ENCODE measurements at regions of chr5 and their contacts with region 1.

Region 1: DNA sequence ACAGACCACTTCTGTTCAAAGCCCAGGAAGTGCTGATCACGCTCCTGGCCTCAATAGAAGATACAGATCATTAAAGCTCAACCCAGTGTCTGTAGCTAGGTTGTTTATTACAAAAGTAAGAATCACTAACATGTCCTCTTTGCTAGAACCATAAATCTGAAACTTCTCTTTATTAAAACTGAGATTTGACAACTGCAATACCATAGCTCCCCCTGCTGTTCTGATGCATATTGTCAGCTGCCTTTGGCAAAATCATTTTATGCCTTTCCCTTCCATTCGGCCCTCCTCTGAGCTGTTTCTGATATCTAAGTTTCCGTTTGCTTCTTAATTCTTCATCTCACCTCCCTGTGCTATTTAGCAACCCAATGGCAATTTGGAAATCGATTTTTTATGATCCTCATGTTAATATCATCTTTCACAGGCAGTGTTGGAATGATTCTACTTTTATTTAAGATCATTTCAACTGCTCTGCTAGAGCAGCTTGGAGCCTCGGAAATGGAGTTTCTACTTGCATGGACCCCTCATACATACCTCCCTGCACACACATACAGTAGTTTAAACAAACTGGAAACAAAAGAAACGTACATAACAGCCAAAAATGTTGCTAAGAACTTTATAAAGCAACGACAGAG is 998.8 kb downstream of the MAT2B start:
- DNase-seq: peak; percentile 15 to 67 (median 26)
- ATAC-seq: peak; percentile 78
- H3K4me3 ChIP-seq: no peak overlapping the region
- H3K27ac ChIP-seq: no peak overlapping the region
- H3K4me1 ChIP-seq: no peaks in the 10 kb centered on the region
- H3K27me3 ChIP-seq: no peaks in the 10 kb centered on the region
- CTCF ChIP-seq: peak; percentile 61 to 88 (median 75)
- EP300 ChIP-seq: no peak
- POLR2A ChIP-seq: no peak
- RAD21 ChIP-seq: peak; percentile 95 to 96

Region 2: GRCh38 chr5:163695830-163696578 is 808.3 kb before region 1 on chr5:
- CTCF ChIA-PET with region 1: no interaction called
- POLR2A ChIA-PET with region 1: no interaction called
- in situ Hi-C with region 1: no loop called
- intact Hi-C with region 1: loop called (anchors 10 kb)
- DNase-seq: peak in 2 of 4 experiments; percentile 5 to 8
- ATAC-seq: peak; percentile 62; the same call in 2 of the 3 replicates
- H3K4me3 ChIP-seq: no peak overlapping the region
- H3K27ac ChIP-seq: no peak overlapping the region
- H3K4me1 ChIP-seq: no peaks in the 10 kb centered on the region
- H3K27me3 ChIP-seq: no peaks in the 10 kb centered on the region
- CTCF ChIP-seq: peak in 2 of 3 experiments; percentile 35 to 39; a peak in 1 of 6 replicates
- EP300 ChIP-seq: no peak
- POLR2A ChIP-seq: no peak
- RAD21 ChIP-seq: peak; percentile 37 to 66; a peak in 3 of 4 replicates

Region 3: GRCh38 chr5:164013077-164013670 is 491.1 kb before region 1 on chr5:
- CTCF ChIA-PET with region 1: interaction called, 11 read pairs
- POLR2A ChIA-PET with region 1: no interaction called
- in situ Hi-C with region 1: no loop called
- intact Hi-C with region 1: loop called (anchors 1 kb)
- DNase-seq: peak; percentile 37 to 80 (median 42)
- ATAC-seq: peak; percentile 82
- H3K4me3 ChIP-seq: no peak overlapping the region
- H3K27ac ChIP-seq: no peak overlapping the region
- H3K4me1 ChIP-seq: no peaks in the 10 kb centered on the region
- H3K27me3 ChIP-seq: no peaks in the 10 kb centered on the region
- CTCF ChIP-seq: peak; percentile 57 to 77 (median 68)
- EP300 ChIP-seq: no peak
- POLR2A ChIP-seq: no peak
- RAD21 ChIP-seq: peak; percentile 93 to 94

Region 4: DNA sequence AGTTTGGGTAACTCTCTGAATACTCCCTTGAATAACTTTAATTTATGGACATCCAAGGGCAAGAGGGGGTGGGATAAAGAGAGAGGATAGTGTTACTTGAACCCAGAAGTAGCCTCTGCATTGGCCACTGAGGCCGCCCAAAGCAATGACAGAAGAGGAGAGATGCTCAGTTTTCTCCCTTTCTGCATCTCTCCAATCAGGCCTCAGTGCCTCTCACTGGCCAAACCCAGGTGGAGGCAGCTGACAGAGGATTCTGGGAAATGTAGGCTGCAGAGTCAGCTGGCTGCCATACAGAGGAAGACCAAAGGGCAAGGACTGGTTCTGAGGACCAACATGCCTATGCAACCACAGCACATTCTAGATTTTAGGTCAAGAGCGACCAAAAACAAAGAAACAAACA is 279.5 kb before region 1 on chr5:
- CTCF ChIA-PET with region 1: no interaction called
- POLR2A ChIA-PET with region 1: no interaction called
- in situ Hi-C with region 1: no loop called
- intact Hi-C with region 1: loop called (anchors 1 kb)
- DNase-seq: no peak
- ATAC-seq: peak; percentile 70
- H3K4me3 ChIP-seq: no peak overlapping the region
- H3K27ac ChIP-seq: no peak overlapping the region
- H3K4me1 ChIP-seq: no peaks in the 10 kb centered on the region; a peak in 1 of 5 replicates
- H3K27me3 ChIP-seq: no peaks in the 10 kb centered on the region
- CTCF ChIP-seq: no peak
- EP300 ChIP-seq: no peak
- POLR2A ChIP-seq: no peak
- RAD21 ChIP-seq: no peak

Region 5: GRCh38 chr5:164593982-164594381 is 89.7 kb after region 1 on chr5:
- CTCF ChIA-PET with region 1: no interaction called
- POLR2A ChIA-PET with region 1: no interaction called
- in situ Hi-C with region 1: no loop called
- intact Hi-C with region 1: no loop called
- DNase-seq: no peak
- ATAC-seq: no peak
- H3K4me3 ChIP-seq: no peak overlapping the region
- H3K27ac ChIP-seq: no peak overlapping the region
- H3K4me1 ChIP-seq: no peaks in the 10 kb centered on the region
- H3K27me3 ChIP-seq: no peaks in the 10 kb centered on the region
- CTCF ChIP-seq: no peak
- EP300 ChIP-seq: no peak
- POLR2A ChIP-seq: no peak
- RAD21 ChIP-seq: no peak

Measured in K562 (cell line).